CD4-positive, alpha-beta memory T cell (primary cell): ENCODE measurements at regions of chr17 and their contacts with region 1.

Region 1: DNA sequence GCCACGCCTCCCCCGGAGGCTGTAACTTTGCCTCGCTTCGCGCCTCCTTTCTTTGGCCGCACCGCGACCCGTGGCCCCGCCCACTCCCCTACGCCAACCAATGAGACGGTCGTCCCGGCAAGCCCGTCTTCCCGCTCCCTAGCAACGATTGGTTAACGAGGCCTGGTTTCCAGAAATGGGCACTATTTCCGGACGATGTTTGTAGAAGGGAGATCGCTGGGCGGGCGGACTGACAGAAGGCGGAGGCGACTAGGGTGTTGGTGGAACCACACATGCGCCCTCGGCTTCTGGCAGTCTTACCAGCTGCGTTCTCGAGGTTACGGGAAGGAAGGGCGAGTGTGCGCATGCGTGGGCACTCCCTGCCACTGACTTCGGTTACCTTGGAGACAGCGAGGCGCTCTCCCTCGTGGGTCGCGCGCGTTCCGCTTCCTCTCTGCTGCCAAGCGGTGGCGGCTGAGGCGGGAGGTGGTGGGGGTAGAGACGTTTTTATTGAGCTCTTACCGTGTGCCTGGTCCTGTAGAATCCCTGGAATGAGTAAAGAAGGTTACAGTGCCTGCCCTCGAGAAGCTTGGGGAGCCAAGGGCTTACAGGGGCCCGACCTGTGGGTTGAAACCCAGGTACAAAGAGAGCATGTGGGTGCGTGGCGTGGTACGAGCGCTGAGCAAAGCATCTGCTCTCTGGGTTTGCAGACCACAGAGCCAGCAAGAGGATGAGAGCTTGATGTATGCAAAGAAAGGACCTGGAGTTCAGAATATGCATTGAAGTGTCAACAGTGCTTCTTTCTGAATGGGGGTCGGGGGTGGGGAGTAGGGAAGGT is 500 bp upstream of the MAP3K14 start:
- DNase-seq: peak; percentile 99 to 100 (median 100)
- H3K4me3 ChIP-seq: peak overlapping the region; percentile 48 to 92
- H3K4me3 Mint-ChIP-seq: peak overlapping the region; percentile 88 to 93 (median 91)
- H3K27ac ChIP-seq: peak overlapping the region; percentile 77
- H3K27ac Mint-ChIP-seq: peak overlapping the region; percentile 86 to 98 (median 97)
- H3K4me1 ChIP-seq: peaks cover 84% of the 10 kb centered on the region
- H3K4me1 Mint-ChIP-seq: peaks cover 60 to 91% (median 75%) of the 10 kb centered on the region in 4 donors
- H3K27me3 ChIP-seq: no peaks in the 10 kb centered on the region
- H3K27me3 Mint-ChIP-seq: no peaks in the 10 kb centered on the region

Region 2: DNA sequence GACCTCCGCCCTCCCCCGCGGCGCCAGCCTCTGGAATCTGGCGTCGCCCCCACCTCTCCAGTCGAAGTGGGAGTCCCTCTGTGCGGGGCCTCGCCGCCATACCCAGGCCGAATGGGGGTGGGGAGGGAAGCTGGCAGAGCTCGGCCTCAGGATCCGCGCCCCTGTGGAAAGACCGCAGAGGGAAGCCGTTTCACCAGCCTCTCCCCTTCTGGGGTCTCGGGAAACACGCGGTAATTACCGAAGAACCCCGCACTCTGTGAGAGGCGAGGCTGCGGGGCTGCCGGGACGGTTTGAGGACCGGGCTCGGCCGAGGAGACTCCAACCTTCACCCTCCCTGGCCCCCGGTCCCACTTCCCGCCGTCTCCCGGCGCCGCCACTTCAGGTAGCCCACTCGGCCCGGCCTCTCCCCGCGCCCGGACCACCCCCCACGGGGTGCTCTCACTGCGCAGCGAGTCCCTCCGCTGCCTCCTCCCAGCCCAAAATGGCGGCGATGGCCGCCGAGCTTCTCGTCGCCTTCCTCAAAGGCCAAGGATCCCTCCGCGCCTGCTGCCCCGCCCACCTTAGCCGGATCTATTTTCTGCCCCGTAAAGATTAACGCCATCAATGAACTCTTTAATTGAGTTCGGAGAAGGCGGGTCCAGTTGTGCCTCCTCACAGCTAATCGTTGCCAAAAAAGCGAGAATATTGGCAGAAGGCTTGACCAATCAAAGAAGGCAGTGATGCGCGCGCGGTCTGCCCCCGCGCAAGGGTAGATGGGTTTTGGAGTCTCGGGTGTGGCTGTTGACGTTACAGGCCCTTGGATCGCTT is 156.1 kb before region 1 on chr17:
- CTCF ChIA-PET with region 1: no interaction called
- POLR2A ChIA-PET with region 1: interaction called, 32 read pairs
- intact Hi-C with region 1: loop called (anchors 5 kb)
- DNase-seq: peak; percentile 99 to 100 (median 99)
- H3K4me3 ChIP-seq: peak overlapping the region; percentile 72 to 87
- H3K4me3 Mint-ChIP-seq: peak overlapping the region; percentile 85 to 99 (median 98)
- H3K27ac ChIP-seq: peak overlapping the region; percentile 99
- H3K27ac Mint-ChIP-seq: peak overlapping the region; percentile 90 to 100 (median 98)
- H3K4me1 ChIP-seq: peaks cover 33% of the 10 kb centered on the region
- H3K4me1 Mint-ChIP-seq: peaks cover 19 to 52% (median 39%) of the 10 kb centered on the region in 4 donors
- H3K27me3 ChIP-seq: no peaks in the 10 kb centered on the region
- H3K27me3 Mint-ChIP-seq: no peaks in the 10 kb centered on the region

Region 3: DNA sequence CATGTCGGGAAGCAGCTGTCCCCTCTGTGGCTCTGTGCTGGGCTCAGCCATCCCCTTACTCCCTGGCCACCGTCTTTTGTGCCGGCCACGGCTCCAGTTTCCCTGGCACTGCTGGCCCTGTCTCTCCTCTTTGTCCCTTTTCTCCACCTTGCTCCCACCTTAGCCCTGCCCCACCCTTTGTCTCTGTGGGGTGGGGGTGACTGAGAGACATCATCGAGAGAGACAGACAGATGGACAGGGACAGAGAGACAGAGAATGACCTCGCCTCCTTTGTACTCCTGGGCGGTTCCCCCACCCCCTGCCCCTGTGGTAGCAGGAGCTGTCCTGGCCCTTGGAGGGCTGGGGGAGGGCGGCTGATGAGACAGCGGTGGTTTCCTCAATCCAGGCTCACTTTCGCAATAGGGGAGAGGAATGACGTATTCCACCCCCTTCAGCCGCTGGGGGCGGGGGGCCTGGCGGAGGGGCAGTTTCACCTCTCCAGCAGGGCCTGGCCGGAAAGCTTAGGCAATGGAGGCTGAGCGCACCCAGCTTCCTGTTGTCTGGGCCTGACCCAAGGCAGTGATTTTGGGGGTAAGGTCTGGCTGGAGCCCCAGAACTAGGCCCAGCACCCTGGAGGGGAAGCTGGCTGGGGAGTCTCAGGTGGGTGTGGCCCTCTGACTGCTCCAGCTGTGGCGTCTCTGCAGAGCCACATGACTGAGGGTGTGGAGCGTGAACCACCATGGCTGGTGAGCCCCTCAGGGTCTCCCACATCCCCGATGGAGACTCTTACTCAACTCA is 88.4 kb before region 1 on chr17:
- CTCF ChIA-PET with region 1: interaction called, 15 read pairs
- POLR2A ChIA-PET with region 1: interaction called, 324 read pairs
- intact Hi-C with region 1: loop called (anchors 1 kb)
- DNase-seq: peak; percentile 78 to 97 (median 84)
- H3K4me3 ChIP-seq: peak overlapping the region; percentile 43 to 74
- H3K4me3 Mint-ChIP-seq: peak overlapping the region; percentile 96 to 100 (median 99)
- H3K27ac ChIP-seq: peak overlapping the region; percentile 97
- H3K27ac Mint-ChIP-seq: peak overlapping the region; percentile 99 to 100 (median 100)
- H3K4me1 ChIP-seq: peaks cover 95% of the 10 kb centered on the region
- H3K4me1 Mint-ChIP-seq: peaks cover 48 to 99% (median 69%) of the 10 kb centered on the region in 4 donors
- H3K27me3 ChIP-seq: no peaks in the 10 kb centered on the region
- H3K27me3 Mint-ChIP-seq: no peaks in the 10 kb centered on the region

Region 4: GRCh38 chr17:45261577-45262515 is 55.5 kb before region 1 on chr17 and contains the start of gene SPATA32:
- CTCF ChIA-PET with region 1: interaction called, 4 read pairs
- POLR2A ChIA-PET with region 1: interaction called, 11 read pairs
- intact Hi-C with region 1: no loop called
- DNase-seq: peak; percentile 61 to 76 (median 66)
- H3K4me3 ChIP-seq: peak within 1 kb of the TSS in 1 of 2 donors; percentile 48
- H3K4me3 Mint-ChIP-seq: peak within 1 kb of the TSS; percentile 76 to 88 (median 82)
- H3K27ac ChIP-seq: peak within 1 kb of the TSS; percentile 55
- H3K27ac Mint-ChIP-seq: peak within 1 kb of the TSS; percentile 71 to 91 (median 84)
- H3K4me1 ChIP-seq: peaks cover 26% of the 10 kb centered on the region
- H3K4me1 Mint-ChIP-seq: peaks cover 14 to 42% (median 26%) of the 10 kb centered on the region in 4 donors
- H3K27me3 ChIP-seq: no peaks in the 10 kb centered on the region
- H3K27me3 Mint-ChIP-seq: no peaks in the 10 kb centered on the region
- total RNA-seq, gene SPATA32: 0.22 to 0.41 TPM

Region 5: DNA sequence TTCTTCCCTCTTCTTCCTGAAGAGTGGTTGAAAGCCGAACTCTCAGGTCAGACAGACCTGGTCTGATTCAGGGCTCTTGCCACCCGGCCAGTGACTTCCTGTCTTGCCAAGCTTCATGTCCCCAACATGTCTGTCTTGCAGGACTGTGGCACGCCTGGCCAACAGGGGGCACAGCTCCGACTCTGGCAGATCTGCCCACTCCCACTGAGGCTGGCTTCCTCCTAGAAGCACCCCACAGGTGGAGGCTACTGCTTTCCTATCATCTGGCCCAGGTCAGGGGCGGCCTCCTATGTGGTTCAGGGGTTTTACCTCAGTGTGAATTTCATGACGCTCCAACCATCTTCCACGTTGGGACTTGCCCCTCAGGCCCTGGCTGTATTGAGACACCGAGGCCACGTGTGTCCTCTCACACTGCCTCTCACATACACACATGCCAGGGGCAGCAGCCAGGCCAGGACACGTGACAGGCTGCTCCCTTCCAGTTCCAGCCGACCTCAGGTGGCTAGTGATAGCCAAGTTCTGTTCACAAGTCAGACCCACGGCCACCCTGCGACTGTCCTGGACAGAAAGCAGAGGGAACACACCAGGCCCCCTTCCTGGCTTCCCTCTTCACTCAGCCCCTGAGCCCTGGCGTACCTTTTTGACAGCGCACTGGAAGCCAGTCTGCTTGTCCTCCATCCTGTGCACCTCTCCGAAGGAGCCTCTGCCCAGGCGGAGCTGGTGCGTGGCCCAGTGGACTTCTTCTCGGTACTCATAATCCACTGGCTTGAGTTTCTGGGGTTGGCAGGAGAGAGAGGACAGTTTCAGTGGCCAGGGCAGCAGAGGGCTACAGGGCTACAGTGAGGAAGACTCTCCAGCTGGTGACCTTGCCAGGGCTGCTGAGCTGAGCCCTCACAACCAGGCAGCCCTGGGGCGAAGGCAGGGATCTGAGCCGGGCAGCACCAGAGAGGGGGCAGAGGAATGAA is 32.9 kb before region 1 on chr17:
- CTCF ChIA-PET with region 1: interaction called, 10 read pairs
- POLR2A ChIA-PET with region 1: interaction called, 8 read pairs
- intact Hi-C with region 1: no loop called
- DNase-seq: peak in 1 of 5 donors; percentile 15
- H3K4me3 ChIP-seq: no peak overlapping the region
- H3K4me3 Mint-ChIP-seq: no peak overlapping the region
- H3K27ac ChIP-seq: no peak overlapping the region
- H3K27ac Mint-ChIP-seq: peak overlapping the region in 5 of 7 donors; percentile 68 to 78 (median 75)
- H3K4me1 ChIP-seq: no peaks in the 10 kb centered on the region
- H3K4me1 Mint-ChIP-seq: peaks cover 0 to 2% (median 1%) of the 10 kb centered on the region in 4 donors
- H3K27me3 ChIP-seq: no peaks in the 10 kb centered on the region
- H3K27me3 Mint-ChIP-seq: no peaks in the 10 kb centered on the region

Region 6: DNA sequence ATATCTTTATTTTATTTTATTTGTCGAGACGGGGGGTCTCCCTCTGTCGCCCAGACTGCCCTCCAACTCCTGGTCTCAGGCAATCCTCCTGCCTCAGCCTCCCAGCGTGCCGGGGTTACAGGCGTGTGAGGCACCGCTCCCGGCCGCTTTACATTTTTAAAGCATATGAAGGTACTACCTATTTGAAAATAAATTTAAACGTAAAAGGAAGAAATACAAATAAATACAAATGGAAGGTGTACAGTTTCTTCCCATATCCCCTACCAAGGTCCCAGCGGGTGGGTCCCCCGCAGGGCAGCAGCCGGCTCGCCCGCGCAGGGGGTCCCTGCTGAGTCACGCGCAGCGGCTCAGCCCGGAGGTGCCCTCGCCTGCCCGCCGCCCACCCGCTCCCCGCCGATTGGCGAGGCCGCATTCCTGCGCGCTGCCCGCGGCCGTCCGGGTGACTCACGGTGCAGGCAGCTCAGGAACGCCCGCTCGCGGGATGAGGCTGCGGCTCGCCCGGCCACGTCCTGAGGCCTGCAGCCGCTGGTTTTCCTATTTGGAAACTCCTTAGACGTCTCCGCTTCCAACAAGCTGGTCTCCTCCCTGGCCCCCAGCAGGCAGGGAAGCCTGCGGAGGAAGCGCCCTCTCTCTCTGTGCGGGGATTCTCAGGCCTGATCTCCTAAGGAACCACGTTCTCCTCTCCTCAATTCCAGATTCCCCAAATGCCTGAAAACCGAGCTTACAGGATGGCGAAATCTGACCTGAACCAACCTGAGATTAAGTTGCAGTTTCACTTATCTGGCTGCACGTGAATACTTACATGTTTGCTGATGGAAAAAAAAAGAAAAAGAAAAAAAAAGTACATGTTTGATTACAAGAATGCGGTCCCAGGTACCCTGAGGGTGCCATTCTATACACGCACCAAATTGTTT is 54.4 kb after region 1 on chr17:
- CTCF ChIA-PET with region 1: interaction called, 3 read pairs
- POLR2A ChIA-PET with region 1: interaction called, 10 read pairs
- intact Hi-C with region 1: no loop called
- DNase-seq: no peak
- H3K4me3 ChIP-seq: no peak overlapping the region
- H3K4me3 Mint-ChIP-seq: peak overlapping the region in 7 of 8 donors; percentile 47 to 80 (median 69)
- H3K27ac ChIP-seq: no peak overlapping the region
- H3K27ac Mint-ChIP-seq: peak overlapping the region in 1 of 7 donors; percentile 7
- H3K4me1 ChIP-seq: peaks cover 7% of the 10 kb centered on the region
- H3K4me1 Mint-ChIP-seq: peaks cover 5 to 16% (median 8%) of the 10 kb centered on the region in 4 donors
- H3K27me3 ChIP-seq: no peaks in the 10 kb centered on the region
- H3K27me3 Mint-ChIP-seq: peaks cover 6 to 10% of the 10 kb centered on the region in 2 donors